Activated CD4-positive, alpha-beta T cell treated with anti-CD3 and anti-CD28 coated beads for 36 hours (primary cell): ENCODE measurements at regions of chr10 and their contacts with region 1.

Region 1: DNA sequence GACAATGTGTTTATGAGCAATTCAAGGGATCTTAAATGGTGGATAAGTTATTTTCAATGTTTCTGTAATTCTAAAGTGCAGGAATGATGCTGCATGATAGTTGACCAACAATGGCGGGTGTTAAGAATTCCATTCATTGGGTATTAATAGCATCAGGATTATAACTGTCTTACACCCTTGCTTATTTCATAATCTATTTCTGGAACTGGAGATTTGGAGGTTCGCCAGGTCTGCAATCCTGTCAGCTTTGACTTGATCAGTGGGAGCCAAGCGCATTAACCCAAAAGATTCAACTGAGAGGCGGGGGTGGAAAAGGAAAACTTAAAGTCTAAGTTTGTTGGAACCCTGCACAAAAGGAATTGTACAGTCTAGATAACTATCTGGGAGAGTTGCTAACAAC is 114.9 kb upstream of the ZEB1 start:
- DNase-seq: no peak
- ATAC-seq: no peak
- H3K4me3 Mint-ChIP-seq: no peak overlapping the region
- H3K27ac Mint-ChIP-seq: no peak overlapping the region
- H3K4me1 Mint-ChIP-seq: no peaks in the 10 kb centered on the region
- H3K27me3 Mint-ChIP-seq: no peaks in the 10 kb centered on the region

Region 2: DNA sequence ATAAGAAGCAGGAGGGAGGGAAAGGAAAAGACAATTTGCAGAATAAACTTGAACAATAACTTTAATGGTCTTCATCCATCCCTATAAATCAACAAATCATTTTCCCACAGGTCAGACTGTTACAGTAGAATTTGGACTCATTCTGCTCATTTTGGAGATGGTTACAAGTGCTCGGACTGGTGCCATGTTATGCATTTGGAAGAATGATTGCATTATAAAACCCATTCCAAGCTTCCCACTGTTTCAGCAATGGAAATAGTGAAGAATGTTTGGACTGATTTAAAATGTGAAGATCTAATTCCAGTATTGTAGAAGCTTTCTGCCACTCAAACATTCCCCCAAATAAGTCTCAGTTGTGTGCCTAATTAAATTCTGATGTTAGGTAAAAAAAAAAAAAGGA is 15.2 kb after region 1 on chr10:
- CTCF ChIA-PET with region 1: no interaction called
- POLR2A ChIA-PET with region 1: no interaction called
- intact Hi-C with region 1: loop called in 1 of 2 experiments (anchors 2 kb)
- DNase-seq: no peak
- ATAC-seq: no peak
- H3K4me3 Mint-ChIP-seq: no peak overlapping the region
- H3K27ac Mint-ChIP-seq: no peak overlapping the region
- H3K4me1 Mint-ChIP-seq: no peaks in the 10 kb centered on the region
- H3K27me3 Mint-ChIP-seq: no peaks in the 10 kb centered on the region